ENCODE measurements at regions of chr7 and their contacts with region 1.

Region 1: GRCh38 chr7:154744256-154744860 is 258.6 kb downstream of the PAXIP1 start:
- DNase-seq: peak in 1 of 2 experiments; percentile 52
- H3K4me3 ChIP-seq: no peak overlapping the region
- H3K4me3 Mint-ChIP-seq: no peak overlapping the region
- H3K27ac Mint-ChIP-seq: no peak overlapping the region
- H3K4me1 ChIP-seq: no peaks in the 10 kb centered on the region
- H3K4me1 Mint-ChIP-seq: no peaks in the 10 kb centered on the region
- H3K27me3 ChIP-seq: no peaks in the 10 kb centered on the region
- H3K27me3 Mint-ChIP-seq: peaks cover 40% of the 10 kb centered on the region
- CTCF ChIP-seq: peak; percentile 78 to 89

Region 2: GRCh38 chr7:154640266-154640865 is 104.0 kb before region 1 on chr7:
- CTCF ChIA-PET with region 1: no interaction called
- POLR2A ChIA-PET with region 1: no interaction called
- intact Hi-C with region 1: loop called (anchors 1 kb)
- DNase-seq: peak in 1 of 2 experiments; percentile 22
- H3K4me3 ChIP-seq: no peak overlapping the region
- H3K4me3 Mint-ChIP-seq: no peak overlapping the region
- H3K27ac Mint-ChIP-seq: no peak overlapping the region
- H3K4me1 ChIP-seq: no peaks in the 10 kb centered on the region
- H3K4me1 Mint-ChIP-seq: no peaks in the 10 kb centered on the region
- H3K27me3 ChIP-seq: no peaks in the 10 kb centered on the region; the same call in 1 of the 2 replicates
- H3K27me3 Mint-ChIP-seq: peaks cover 4% of the 10 kb centered on the region
- CTCF ChIP-seq: peak; percentile 47 to 49

Region 3: DNA sequence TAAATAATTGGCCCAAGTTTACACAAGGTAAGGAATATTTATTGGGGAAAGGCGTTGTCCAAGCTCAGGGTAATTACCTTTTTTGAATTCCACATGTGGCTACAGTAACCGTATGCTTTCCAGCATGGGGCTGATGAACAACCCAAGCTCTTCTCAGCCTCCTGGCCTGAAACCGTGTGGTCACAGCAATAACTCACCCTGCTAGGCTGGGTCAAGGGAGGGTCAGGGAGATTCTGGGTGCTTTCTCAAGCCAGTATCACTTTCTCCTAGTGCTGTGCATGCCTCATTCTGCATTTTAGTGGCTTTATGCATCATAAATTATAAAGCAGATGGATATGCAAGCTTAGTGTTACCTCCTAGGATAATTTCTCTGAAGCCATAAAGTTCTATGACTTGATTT is 15.3 kb before region 1 on chr7:
- CTCF ChIA-PET with region 1: no interaction called
- POLR2A ChIA-PET with region 1: no interaction called
- intact Hi-C with region 1: no loop called
- DNase-seq: no peak
- H3K4me3 ChIP-seq: no peak overlapping the region
- H3K4me3 Mint-ChIP-seq: no peak overlapping the region
- H3K27ac Mint-ChIP-seq: no peak overlapping the region
- H3K4me1 ChIP-seq: no peaks in the 10 kb centered on the region
- H3K4me1 Mint-ChIP-seq: no peaks in the 10 kb centered on the region
- H3K27me3 ChIP-seq: no peaks in the 10 kb centered on the region
- H3K27me3 Mint-ChIP-seq: no peaks in the 10 kb centered on the region
- CTCF ChIP-seq: no peak

Measured in Caco-2 (cell line).